Activated CD4-positive, alpha-beta T cell treated with anti-CD3 and anti-CD28 coated beads, Interleukin-2, amount 10 ng/mL, durations not matched to agents 24 days and 14 days (primary cell): ENCODE measurements at regions of chr9 and their contacts with region 1.

Region 1: GRCh38 chr9:98074115-98074990 is 17.8 kb downstream of the NANS start:
- DNase-seq: peak; percentile 91
- H3K4me3 Mint-ChIP-seq: peak overlapping the region; percentile 52
- H3K27ac Mint-ChIP-seq: peak overlapping the region; percentile 89
- H3K4me1 Mint-ChIP-seq: peaks cover 38% of the 10 kb centered on the region
- H3K27me3 Mint-ChIP-seq: no peaks in the 10 kb centered on the region

Region 2: GRCh38 chr9:97710356-97711222 is 363.8 kb before region 1 on chr9:
- intact Hi-C with region 1: no loop called
- DNase-seq: peak; percentile 87
- H3K4me3 Mint-ChIP-seq: peak overlapping the region; percentile 31
- H3K27ac Mint-ChIP-seq: no peak overlapping the region
- H3K4me1 Mint-ChIP-seq: peaks cover 27% of the 10 kb centered on the region
- H3K27me3 Mint-ChIP-seq: peaks cover 26% of the 10 kb centered on the region

Region 3: GRCh38 chr9:97921959-97922724 is 152.2 kb before region 1 on chr9 and contains the start of gene TRMO:
- intact Hi-C with region 1: no loop called
- DNase-seq: peak; percentile 99
- H3K4me3 Mint-ChIP-seq: peak within 1 kb of the TSS; percentile 93
- H3K27ac Mint-ChIP-seq: peak within 1 kb of the TSS; percentile 98
- H3K4me1 Mint-ChIP-seq: peaks cover 47% of the 10 kb centered on the region
- H3K27me3 Mint-ChIP-seq: peaks cover 2% of the 10 kb centered on the region
- total RNA-seq, gene TRMO: 9.8 and 13.0 TPM in 2 replicates

Region 4: GRCh38 chr9:97990266-97990665 is 84.1 kb before region 1 on chr9:
- intact Hi-C with region 1: no loop called
- DNase-seq: no peak
- H3K4me3 Mint-ChIP-seq: peak overlapping the region; percentile 37
- H3K27ac Mint-ChIP-seq: peak overlapping the region; percentile 45
- H3K4me1 Mint-ChIP-seq: peaks cover 76% of the 10 kb centered on the region
- H3K27me3 Mint-ChIP-seq: no peaks in the 10 kb centered on the region

Region 5: GRCh38 chr9:98101868-98102273 is 27.5 kb after region 1 on chr9:
- intact Hi-C with region 1: loop called (anchors 2 kb)
- DNase-seq: peak; percentile 95
- H3K4me3 Mint-ChIP-seq: peak overlapping the region; percentile 80
- H3K27ac Mint-ChIP-seq: peak overlapping the region; percentile 93
- H3K4me1 Mint-ChIP-seq: peaks cover 73% of the 10 kb centered on the region
- H3K27me3 Mint-ChIP-seq: no peaks in the 10 kb centered on the region

Region 6: DNA sequence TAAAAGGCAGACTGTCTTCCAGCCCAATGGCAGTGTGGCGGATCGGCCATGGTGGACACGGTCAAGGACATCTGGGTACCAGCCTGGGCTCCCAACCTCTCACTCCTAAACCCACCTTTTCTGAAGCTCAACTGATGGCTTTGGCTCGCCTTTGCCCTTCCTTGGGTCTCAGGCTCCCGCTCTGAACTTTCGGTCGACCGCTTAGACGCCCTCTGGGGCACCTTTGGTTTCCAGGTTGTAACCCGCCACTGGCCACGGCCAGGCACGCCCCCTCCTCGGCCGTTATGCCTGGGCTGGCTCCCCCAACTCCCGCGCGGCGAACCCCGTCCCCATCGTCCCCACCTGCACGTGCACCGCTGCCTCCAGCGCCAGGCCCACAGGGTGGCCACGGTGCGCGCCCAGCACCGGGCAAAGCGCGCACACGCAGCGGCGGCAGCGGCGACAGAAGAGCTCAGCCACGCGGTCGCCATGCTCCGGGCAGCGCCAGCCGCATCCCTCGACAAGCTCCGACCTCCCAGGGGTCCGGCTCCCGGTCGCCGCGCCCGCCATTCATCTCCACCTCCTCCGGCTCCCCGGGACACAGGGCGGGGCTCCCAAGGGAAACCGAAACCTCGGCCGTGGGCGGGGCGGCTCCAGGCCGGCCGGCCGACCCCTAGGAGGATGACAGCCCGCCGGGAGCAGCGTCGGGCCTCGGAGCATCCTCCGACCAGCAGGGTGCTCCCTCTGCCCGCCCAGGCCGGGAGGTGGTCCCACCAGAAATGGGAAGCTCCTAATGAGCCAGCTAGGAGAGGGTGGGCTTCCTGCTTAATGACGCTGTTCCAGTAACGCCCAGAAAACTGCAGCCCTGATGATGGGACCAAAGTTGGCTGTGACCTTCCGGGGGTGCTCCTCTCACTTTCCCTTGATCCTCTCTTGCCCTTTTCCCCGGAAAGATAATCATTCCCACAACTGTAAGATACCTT is 44.6 kb after region 1 on chr9 and contains the start of gene TRIM14:
- intact Hi-C with region 1: loop called (anchors 2 kb)
- DNase-seq: peak; percentile 93
- H3K4me3 Mint-ChIP-seq: peak within 1 kb of the TSS; percentile 87
- H3K27ac Mint-ChIP-seq: peak within 1 kb of the TSS; percentile 89
- H3K4me1 Mint-ChIP-seq: peaks cover 36% of the 10 kb centered on the region
- H3K27me3 Mint-ChIP-seq: no peaks in the 10 kb centered on the region
- total RNA-seq, gene TRIM14: 47.3 and 47.8 TPM in 2 replicates

Region 7: GRCh38 chr9:98192503-98193335 is 118.4 kb after region 1 on chr9 and contains the start of gene CORO2A:
- intact Hi-C with region 1: loop called (anchors 1 kb)
- DNase-seq: peak; percentile 93
- H3K4me3 Mint-ChIP-seq: peak within 1 kb of the TSS; percentile 83
- H3K27ac Mint-ChIP-seq: peak within 1 kb of the TSS; percentile 65
- H3K4me1 Mint-ChIP-seq: peaks cover 10% of the 10 kb centered on the region
- H3K27me3 Mint-ChIP-seq: peaks cover 7% of the 10 kb centered on the region
- total RNA-seq, gene CORO2A: 0.92 and 1.4 TPM in 2 replicates

Region 8: GRCh38 chr9:98204692-98205091 is 130.3 kb after region 1 on chr9:
- intact Hi-C with region 1: loop called (anchors 1 kb)
- DNase-seq: no peak
- H3K4me3 Mint-ChIP-seq: no peak overlapping the region
- H3K27ac Mint-ChIP-seq: no peak overlapping the region
- H3K4me1 Mint-ChIP-seq: peaks cover 5% of the 10 kb centered on the region
- H3K27me3 Mint-ChIP-seq: no peaks in the 10 kb centered on the region

Region 9: GRCh38 chr9:98263482-98264357 is 189.4 kb after region 1 on chr9:
- intact Hi-C with region 1: loop called (anchors 1 kb)
- DNase-seq: peak; percentile 95
- H3K4me3 Mint-ChIP-seq: no peak overlapping the region
- H3K27ac Mint-ChIP-seq: no peak overlapping the region
- H3K4me1 Mint-ChIP-seq: peaks cover 2% of the 10 kb centered on the region
- H3K27me3 Mint-ChIP-seq: peaks cover 23% of the 10 kb centered on the region